ENCODE measurements at regions of chr7 and their contacts with region 1.

Region 1: DNA sequence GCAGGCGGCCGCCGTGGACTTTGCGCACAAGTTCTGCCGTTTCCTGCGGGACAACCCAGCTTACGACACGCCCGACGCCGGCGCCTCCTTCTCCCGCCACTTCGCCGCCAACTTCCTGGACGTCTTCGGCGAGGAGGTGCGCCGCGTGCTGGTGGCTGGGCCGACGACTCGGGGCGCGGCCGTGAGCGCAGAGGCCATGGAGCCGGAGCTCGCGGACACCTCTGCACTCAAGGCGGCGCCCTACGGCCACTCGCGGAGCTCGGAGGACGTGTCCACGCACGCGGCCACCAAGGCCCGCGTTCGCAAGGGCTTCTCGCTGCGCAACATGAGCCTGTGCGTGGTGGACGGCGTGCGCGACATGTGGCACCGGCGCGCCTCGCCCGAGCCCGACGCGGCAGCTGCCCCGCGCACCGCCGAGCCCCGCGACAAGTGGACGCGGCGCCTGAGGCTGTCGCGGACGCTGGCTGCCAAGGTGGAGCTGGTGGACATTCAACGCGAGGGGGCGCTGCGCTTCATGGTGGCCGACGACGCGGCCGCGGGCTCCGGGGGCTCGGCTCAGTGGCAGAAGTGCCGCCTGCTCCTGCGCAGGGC is 14.1 kb downstream of the SH2B2 start:
- DNase-seq: peak; percentile 61 to 85
- ATAC-seq: peak; percentile 12 to 58 (median 35)
- H3K4me3 ChIP-seq: peak overlapping the region; percentile 49
- H3K27ac ChIP-seq: peak overlapping the region; percentile 77
- H3K4me1 ChIP-seq: peaks cover 41% of the 10 kb centered on the region
- H3K27me3 ChIP-seq: no peaks in the 10 kb centered on the region
- CTCF ChIP-seq: peak; percentile 49

Region 2: DNA sequence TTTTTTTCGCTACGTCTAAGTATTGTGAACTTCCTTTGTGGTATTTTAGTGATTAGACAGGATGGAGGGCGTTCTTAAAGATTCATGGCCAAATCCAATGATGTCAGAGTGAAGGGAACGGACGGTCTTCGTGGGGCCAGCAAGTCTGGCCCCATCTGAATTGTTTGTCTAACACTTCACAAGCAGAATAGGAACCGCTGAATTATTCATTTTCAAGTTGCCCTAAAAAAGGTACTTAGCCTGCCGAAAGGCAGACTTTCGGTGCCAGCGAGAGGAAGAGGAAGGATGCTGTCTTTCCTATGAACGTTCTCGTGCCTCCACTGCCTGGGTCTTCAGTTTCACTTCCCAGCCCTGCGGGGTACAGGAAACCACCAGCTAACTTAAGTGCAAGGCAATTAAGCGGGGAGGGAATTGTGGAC is 159.8 kb before region 1 on chr7:
- intact Hi-C with region 1: no loop called
- DNase-seq: no peak
- ATAC-seq: no peak
- H3K4me3 ChIP-seq: no peak overlapping the region
- H3K27ac ChIP-seq: no peak overlapping the region
- H3K4me1 ChIP-seq: peaks cover 5% of the 10 kb centered on the region
- H3K27me3 ChIP-seq: no peaks in the 10 kb centered on the region
- CTCF ChIP-seq: no peak

Region 3: GRCh38 chr7:102272075-102272917 is 28.4 kb before region 1 on chr7:
- intact Hi-C with region 1: no loop called
- DNase-seq: peak; percentile 83 to 91
- ATAC-seq: peak; percentile 93 to 97 (median 96)
- H3K4me3 ChIP-seq: no peak overlapping the region
- H3K27ac ChIP-seq: no peak overlapping the region
- H3K4me1 ChIP-seq: no peaks in the 10 kb centered on the region
- H3K27me3 ChIP-seq: no peaks in the 10 kb centered on the region
- CTCF ChIP-seq: peak; percentile 95

Region 4: GRCh38 chr7:102321351-102322177 is 20.8 kb after region 1 on chr7:
- intact Hi-C with region 1: no loop called
- DNase-seq: no peak
- ATAC-seq: no peak
- H3K4me3 ChIP-seq: no peak overlapping the region
- H3K27ac ChIP-seq: no peak overlapping the region
- H3K4me1 ChIP-seq: no peaks in the 10 kb centered on the region
- H3K27me3 ChIP-seq: no peaks in the 10 kb centered on the region
- CTCF ChIP-seq: no peak

Region 5: GRCh38 chr7:102390697-102391484 is 90.2 kb after region 1 on chr7:
- intact Hi-C with region 1: loop called in 1 of 2 experiments (anchors 5 kb)
- DNase-seq: peak; percentile 84 to 92
- ATAC-seq: peak; percentile 87 to 91 (median 88)
- H3K4me3 ChIP-seq: no peak overlapping the region
- H3K27ac ChIP-seq: no peak overlapping the region
- H3K4me1 ChIP-seq: peaks cover 4% of the 10 kb centered on the region
- H3K27me3 ChIP-seq: no peaks in the 10 kb centered on the region
- CTCF ChIP-seq: peak; percentile 96

Region 6: DNA sequence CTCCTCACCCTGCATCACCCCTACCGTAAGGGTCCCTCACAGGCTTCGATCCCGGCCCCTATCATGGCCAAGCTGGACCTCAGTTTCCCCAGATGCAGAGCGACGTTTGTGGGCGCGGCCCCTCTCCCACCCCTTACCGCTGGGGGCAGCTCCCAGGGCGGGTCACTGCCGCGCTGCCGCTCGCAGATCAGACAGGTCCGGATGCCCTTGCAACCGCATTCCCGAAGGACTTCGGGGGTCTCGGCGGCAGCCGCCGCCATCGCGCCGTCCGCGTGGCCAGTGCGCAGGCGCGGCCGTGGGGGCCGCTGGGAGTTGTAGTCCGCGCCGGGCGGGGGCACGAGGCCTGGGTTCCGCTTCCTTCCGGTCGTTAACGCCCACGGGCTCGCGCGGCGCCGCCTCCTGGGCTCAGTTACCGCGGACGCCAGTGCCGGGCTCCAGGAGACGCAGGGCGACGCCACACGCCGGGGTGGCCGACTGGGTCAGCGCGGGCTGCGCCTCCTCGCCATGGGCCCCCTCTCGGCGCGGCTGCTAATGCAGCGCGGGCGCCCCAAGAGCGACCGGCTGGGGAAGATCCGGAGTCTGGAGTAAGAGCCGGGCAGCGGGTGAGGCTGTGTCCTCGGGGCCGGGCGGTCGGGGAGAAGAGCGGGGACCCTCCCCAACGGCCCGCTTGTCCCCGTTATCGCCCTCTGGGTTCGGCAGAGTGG is 164.0 kb after region 1 on chr7 and contains the starts of genes ALKBH4 and LRWD1:
- intact Hi-C with region 1: no loop called
- DNase-seq: peak; percentile 96 to 98
- ATAC-seq: peak; percentile 95 to 97 (median 96)
- H3K4me3 ChIP-seq: peak within 1 kb of the TSS; percentile 78
- H3K27ac ChIP-seq: peak within 1 kb of the TSS; percentile 71
- H3K4me1 ChIP-seq: peaks cover 15% of the 10 kb centered on the region
- H3K27me3 ChIP-seq: no peaks in the 10 kb centered on the region
- CTCF ChIP-seq: peak; percentile 17
- total RNA-seq, gene ALKBH4: 2.7 to 8.2 (median 6.5) TPM
- total RNA-seq, gene LRWD1: 10.4 to 15.6 (median 12.5) TPM